ENCODE measurements at regions of chr12 and their contacts with region 1.

Region 1: GRCh38 chr12:26274441-26275312 is 79.3 kb downstream of the SSPN start:
- DNase-seq: peak; percentile 95
- H3K4me3 ChIP-seq: no peak overlapping the region
- H3K27ac ChIP-seq: peak overlapping the region; percentile 77 to 85 (median 84)
- H3K4me1 ChIP-seq: peaks cover 0 to 34% (median 31%) of the 10 kb centered on the region in 4 donors
- H3K27me3 ChIP-seq: no peaks in the 10 kb centered on the region
- CTCF ChIP-seq: no peak
- EP300 ChIP-seq: peak in 1 of 4 donors; percentile 64
- POLR2A ChIP-seq: no peak

Region 2: GRCh38 chr12:26233631-26234030 is 41.0 kb before region 1 on chr12:
- intact Hi-C with region 1: loop called (anchors 5 kb)
- DNase-seq: no peak
- H3K4me3 ChIP-seq: no peak overlapping the region
- H3K27ac ChIP-seq: peak overlapping the region in 2 of 4 donors; percentile 42 to 60
- H3K4me1 ChIP-seq: peaks cover 0 to 16% (median 5%) of the 10 kb centered on the region in 4 donors
- H3K27me3 ChIP-seq: no peaks in the 10 kb centered on the region
- CTCF ChIP-seq: no peak
- EP300 ChIP-seq: no peak
- POLR2A ChIP-seq: no peak